Calu3 (cell line): ENCODE measurements at regions of chr15 and their contacts with region 1.

Region 1: GRCh38 chr15:70182857-70183695 is 85.4 kb upstream of the TLE3 start:
- DNase-seq: no peak
- H3K4me3 Mint-ChIP-seq: no peak overlapping the region
- H3K27ac Mint-ChIP-seq: no peak overlapping the region
- H3K4me1 Mint-ChIP-seq: peaks cover 22% of the 10 kb centered on the region
- H3K27me3 Mint-ChIP-seq: peaks cover 44% of the 10 kb centered on the region
- CTCF ChIP-seq: no peak

Region 2: DNA sequence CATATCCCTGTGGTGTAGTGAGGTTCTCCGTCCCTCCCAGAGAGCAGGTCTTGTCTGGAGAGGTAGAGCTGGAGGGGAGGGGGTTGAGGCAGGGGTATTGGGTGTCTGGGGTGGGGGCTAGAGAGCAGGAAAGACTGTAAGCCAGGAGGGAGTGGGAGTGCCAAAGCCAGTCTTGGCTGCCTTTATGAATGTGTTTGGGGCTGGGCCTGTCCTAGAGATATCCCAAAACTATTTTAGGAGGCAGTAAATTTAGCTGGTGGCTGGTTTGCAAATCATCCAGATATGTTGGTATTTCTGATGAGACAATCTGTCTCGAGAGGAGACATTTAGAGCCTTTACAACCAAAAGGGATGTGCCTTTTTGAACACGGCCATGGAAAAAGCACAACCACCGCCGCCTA is 251.9 kb before region 1 on chr15:
- CTCF ChIA-PET with region 1: no interaction called
- intact Hi-C with region 1: no loop called
- DNase-seq: no peak
- H3K4me3 Mint-ChIP-seq: no peak overlapping the region
- H3K27ac Mint-ChIP-seq: no peak overlapping the region
- H3K4me1 Mint-ChIP-seq: no peaks in the 10 kb centered on the region
- H3K27me3 Mint-ChIP-seq: peaks cover 94% of the 10 kb centered on the region
- CTCF ChIP-seq: no peak

Region 3: DNA sequence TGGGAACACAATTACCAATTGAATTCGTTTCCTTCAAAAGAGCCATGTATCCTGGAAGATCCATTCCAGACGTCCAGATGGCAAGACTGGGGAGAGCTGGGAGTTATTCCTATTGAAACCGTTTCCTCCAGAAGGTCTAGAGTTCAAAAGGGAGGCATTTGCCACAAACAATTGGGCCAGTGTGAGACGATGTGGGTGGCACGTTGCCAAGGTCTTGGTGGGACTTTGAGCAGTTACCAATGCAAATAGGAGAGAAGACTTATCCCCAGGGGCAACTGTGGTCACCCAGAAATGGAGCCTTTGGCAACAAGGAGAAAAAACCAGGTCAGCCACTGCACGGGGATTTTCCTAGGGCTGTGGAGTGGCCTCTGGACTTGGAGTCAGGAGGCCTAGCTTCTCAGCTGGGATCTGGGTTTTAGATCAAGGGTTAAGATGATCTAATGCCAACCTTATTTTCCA is 55.8 kb before region 1 on chr15:
- CTCF ChIA-PET with region 1: no interaction called
- intact Hi-C with region 1: loop called (anchors 5 kb)
- DNase-seq: peak; percentile 95
- H3K4me3 Mint-ChIP-seq: peak overlapping the region; percentile 1
- H3K27ac Mint-ChIP-seq: peak overlapping the region; percentile 60
- H3K4me1 Mint-ChIP-seq: peaks cover 32% of the 10 kb centered on the region
- H3K27me3 Mint-ChIP-seq: no peaks in the 10 kb centered on the region
- CTCF ChIP-seq: no peak

Region 4: GRCh38 chr15:70281811-70282307 is 98.8 kb after region 1 on chr15:
- CTCF ChIA-PET with region 1: no interaction called
- intact Hi-C with region 1: no loop called
- DNase-seq: no peak
- H3K4me3 Mint-ChIP-seq: no peak overlapping the region
- H3K27ac Mint-ChIP-seq: no peak overlapping the region
- H3K4me1 Mint-ChIP-seq: no peaks in the 10 kb centered on the region
- H3K27me3 Mint-ChIP-seq: peaks cover 37% of the 10 kb centered on the region
- CTCF ChIP-seq: no peak

Region 5: GRCh38 chr15:70385072-70385535 is 202.0 kb after region 1 on chr15:
- CTCF ChIA-PET with region 1: no interaction called
- intact Hi-C with region 1: no loop called
- DNase-seq: no peak
- H3K4me3 Mint-ChIP-seq: no peak overlapping the region
- H3K27ac Mint-ChIP-seq: no peak overlapping the region
- H3K4me1 Mint-ChIP-seq: no peaks in the 10 kb centered on the region
- H3K27me3 Mint-ChIP-seq: peaks cover 14% of the 10 kb centered on the region
- CTCF ChIP-seq: no peak